ENCODE measurements at regions of chr19 and their contacts with region 1.

Region 1: DNA sequence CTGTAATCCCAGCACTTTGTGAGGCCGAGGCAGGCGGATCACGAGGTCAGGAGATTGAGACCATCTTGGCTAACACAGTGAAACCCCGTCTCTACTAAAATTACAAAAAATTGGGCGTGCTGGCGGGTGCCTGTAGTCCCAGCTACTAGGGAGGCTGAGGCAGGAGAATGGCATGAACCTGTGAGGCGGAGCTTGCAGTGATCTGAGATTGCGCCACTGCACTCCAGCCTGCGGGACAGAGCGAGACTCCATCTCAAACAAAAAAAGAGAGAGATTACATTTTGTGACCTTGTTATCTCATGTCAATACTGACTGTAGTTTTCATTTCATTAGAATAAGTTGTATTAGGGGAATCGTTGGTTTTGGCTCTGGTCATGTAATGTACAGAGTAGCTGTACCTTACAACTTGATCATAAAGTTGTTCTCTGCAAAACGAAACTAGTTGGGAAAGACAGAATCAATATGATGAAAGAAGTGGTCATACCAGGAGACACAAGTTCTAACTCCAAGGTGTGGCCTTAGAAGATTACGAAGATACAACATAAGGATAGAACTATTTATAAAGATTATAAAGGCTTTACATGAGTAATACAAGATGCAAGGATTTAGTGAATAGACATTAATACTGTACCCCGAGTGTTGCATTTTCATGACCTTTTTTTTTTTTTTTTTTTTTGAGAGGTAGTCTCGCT is 15.3 kb downstream of the TMEM38A start:
- DNase-seq: no peak
- ATAC-seq: no peak
- H3K4me3 ChIP-seq: no peak overlapping the region
- H3K27ac ChIP-seq: no peak overlapping the region
- H3K4me1 ChIP-seq: no peaks in the 10 kb centered on the region
- H3K27me3 ChIP-seq: no peaks in the 10 kb centered on the region
- CTCF ChIP-seq: no peak

Region 2: DNA sequence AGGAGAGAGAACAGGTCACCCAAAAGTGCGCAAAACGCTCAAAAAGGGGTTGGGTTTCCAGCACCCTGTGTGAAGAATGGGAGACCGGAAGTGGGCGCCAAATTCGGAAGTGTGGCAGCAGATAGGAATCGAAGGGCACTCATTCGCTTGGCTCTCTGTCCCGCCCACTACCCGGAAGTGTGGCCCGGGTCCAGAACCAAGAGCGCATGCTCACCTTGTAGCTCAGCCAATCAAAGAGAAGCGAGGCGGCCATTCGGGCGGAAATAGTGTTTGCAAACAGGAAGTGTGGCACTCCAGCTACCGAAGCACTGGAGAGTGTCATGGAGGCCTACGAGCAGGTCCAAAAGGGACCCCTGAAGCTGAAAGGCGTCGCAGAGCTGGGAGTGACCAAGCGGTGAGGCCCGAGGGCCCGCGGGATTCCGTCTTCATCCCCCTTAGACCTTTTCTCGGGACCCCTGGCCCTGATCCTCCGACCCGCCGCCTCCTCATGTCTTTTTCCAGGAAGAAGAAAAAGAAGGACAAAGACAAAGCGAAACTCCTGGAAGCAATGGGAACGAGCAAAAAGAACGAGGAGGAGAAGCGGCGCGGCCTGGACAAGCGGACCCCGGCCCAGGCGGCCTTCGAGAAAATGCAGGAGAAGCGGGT is 491.0 kb before region 1 on chr19 and contains the start of gene FAM32A:
- CTCF ChIA-PET with region 1: no interaction called
- POLR2A ChIA-PET with region 1: no interaction called
- in situ Hi-C with region 1: no loop called
- intact Hi-C with region 1: no loop called
- DNase-seq: peak; percentile 96
- ATAC-seq: peak; percentile 94
- H3K4me3 ChIP-seq: peak within 1 kb of the TSS; percentile 73 to 97
- H3K27ac ChIP-seq: peak within 1 kb of the TSS; percentile 92
- H3K4me1 ChIP-seq: no peaks in the 10 kb centered on the region; the same call in 1 of the 2 replicates
- H3K27me3 ChIP-seq: no peaks in the 10 kb centered on the region
- CTCF ChIP-seq: no peak
- total RNA-seq, gene FAM32A: 44.6 TPM

Region 3: DNA sequence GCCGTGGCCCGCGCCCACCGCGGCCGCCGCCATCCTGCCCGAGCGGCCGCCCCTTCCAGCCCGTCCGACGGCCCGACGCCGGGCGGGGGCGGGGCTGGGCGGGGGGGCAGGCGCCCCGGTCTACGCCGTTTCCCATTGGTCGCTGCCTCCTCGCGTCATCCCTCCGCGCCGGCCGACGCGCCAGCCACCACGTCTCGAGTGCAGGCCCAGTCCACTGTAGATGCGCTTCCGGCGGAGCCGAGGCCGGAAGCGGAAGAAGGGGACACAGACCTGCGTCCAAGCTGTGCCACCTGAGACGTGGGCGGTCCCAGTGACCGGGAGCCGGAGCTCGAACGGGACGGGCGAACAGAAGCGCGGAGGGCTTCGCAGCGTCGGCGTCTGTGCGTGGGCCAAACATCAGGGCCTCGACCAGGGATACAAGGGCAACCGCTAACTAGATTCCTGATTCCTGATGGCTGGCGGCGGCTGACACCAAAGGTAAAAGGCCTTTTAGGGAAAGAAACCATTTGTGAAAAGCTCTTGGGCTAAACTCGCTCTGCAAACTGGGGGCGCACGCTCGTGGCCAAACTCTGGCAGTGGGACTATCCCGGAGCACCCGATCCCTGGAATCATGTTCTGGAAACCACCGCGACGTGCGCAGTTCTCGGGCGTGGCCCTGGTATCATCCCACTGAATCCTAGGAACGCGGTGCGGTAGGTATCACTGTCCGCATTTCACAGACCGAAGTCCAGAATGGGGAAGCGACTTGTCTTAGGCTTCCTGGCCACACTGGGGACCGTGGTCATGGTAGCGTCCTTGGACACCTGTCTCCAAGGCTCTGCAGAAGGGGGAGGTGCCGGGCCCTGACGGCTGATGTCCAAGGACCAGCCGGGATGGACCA is 103.7 kb before region 1 on chr19 and contains the start of gene SLC35E1:
- CTCF ChIA-PET with region 1: no interaction called
- POLR2A ChIA-PET with region 1: no interaction called
- in situ Hi-C with region 1: no loop called
- intact Hi-C with region 1: no loop called
- DNase-seq: peak; percentile 61
- ATAC-seq: peak; percentile 98
- H3K4me3 ChIP-seq: peak within 1 kb of the TSS; percentile 93 to 94
- H3K27ac ChIP-seq: peak within 1 kb of the TSS; percentile 87
- H3K4me1 ChIP-seq: peaks cover 8% of the 10 kb centered on the region
- H3K27me3 ChIP-seq: no peaks in the 10 kb centered on the region
- CTCF ChIP-seq: no peak
- total RNA-seq, gene SLC35E1: 43.5 TPM

Region 4: GRCh38 chr19:16688084-16688483 is 11.8 kb after region 1 on chr19:
- CTCF ChIA-PET with region 1: interaction called, 5 read pairs
- POLR2A ChIA-PET with region 1: interaction called, 14 read pairs
- in situ Hi-C with region 1: no loop called
- intact Hi-C with region 1: no loop called
- DNase-seq: no peak
- ATAC-seq: no peak
- H3K4me3 ChIP-seq: no peak overlapping the region
- H3K27ac ChIP-seq: no peak overlapping the region
- H3K4me1 ChIP-seq: peaks cover 4% of the 10 kb centered on the region; the same call in 1 of the 2 replicates
- H3K27me3 ChIP-seq: no peaks in the 10 kb centered on the region
- CTCF ChIP-seq: no peak

Region 5: DNA sequence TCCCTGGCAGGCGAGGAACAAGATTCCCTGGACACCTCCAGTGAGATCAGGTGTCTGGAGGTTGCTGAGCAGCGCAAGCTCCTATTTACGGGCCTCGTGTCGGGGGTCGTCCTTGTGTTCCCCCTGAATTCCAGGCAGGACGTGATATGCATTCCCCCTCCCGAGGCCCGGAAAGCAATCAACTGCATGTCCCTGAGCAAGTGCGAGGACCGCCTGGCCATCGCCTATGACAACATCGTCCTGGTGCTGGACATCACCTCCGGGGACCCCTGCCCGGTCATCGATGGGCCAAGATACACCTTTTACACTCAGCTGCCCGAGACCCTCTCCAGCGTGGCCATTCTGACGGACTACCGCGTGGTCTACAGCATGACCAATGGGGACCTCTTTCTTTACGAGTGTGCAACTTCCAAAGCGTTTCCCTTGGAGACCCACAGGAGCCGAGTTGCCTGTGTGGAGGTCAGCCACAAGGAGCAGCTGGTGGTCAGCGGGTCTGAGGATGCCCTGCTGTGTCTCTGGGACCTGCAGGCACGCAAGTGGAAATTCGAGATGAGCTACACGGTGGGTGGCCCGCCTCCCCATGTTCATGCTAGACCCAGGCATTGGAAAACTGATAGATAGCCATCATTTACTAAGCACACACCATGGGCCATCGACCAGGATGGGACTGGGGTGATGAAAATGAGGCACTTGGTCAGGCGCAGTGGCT is 131.5 kb after region 1 on chr19:
- CTCF ChIA-PET with region 1: no interaction called
- POLR2A ChIA-PET with region 1: interaction called, 10 read pairs
- in situ Hi-C with region 1: no loop called
- intact Hi-C with region 1: no loop called
- DNase-seq: no peak
- ATAC-seq: no peak
- H3K4me3 ChIP-seq: no peak overlapping the region
- H3K27ac ChIP-seq: no peak overlapping the region
- H3K4me1 ChIP-seq: no peaks in the 10 kb centered on the region
- H3K27me3 ChIP-seq: no peaks in the 10 kb centered on the region
- CTCF ChIP-seq: no peak

Region 6: DNA sequence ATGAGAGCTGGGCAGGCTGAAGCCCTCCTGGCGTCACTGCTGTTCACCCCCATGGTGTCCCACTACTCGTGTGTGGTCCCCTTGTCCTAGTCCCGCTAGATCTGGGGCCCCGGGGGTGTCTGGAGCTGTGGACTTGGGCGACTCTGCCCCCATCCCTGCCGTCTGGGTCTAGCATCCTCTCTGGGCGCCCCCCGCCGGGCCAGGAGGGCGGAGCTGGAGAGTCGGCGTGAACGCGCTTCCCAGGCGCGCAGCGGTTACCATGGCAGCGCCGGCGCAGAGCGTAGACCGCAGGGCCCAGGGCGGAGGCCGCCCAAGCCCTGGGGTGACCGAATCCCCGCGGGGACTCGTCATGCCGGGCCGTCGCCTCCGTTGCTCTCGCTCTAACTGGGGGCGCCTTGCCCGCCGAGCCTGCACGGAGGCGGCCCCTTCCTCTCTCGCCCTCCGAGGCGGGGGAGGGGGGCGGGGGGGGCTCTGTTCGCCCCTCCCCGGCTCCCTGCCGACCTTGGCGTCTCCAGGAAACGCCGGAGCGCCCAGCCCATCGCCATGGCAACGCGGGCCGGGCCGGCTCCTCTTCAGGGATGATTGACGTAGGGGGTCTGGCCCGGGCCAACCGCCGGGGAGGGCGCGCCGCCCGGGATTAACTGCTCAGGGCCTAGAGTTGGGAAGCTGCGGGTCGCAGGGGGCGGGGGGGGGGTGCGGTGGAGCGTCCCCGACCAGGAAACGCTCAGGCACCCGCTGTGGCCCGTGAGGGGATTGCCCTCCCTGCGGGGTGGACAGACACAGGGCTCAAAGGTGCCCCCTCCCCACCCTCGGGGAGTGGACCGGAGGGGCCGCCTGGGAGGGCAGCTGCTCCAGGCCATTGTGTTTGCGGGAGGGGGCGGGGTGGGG is 1752.8 kb after region 1 on chr19:
- CTCF ChIA-PET with region 1: no interaction called
- POLR2A ChIA-PET with region 1: no interaction called
- in situ Hi-C with region 1: no loop called
- intact Hi-C with region 1: no loop called
- DNase-seq: no peak
- ATAC-seq: peak; percentile 64
- H3K4me3 ChIP-seq: peak overlapping the region; percentile 16 to 18; a peak in 1 of 4 replicates
- H3K27ac ChIP-seq: peak overlapping the region; percentile 54; the same call in 1 of the 2 replicates
- H3K4me1 ChIP-seq: peaks cover 52% of the 10 kb centered on the region
- H3K27me3 ChIP-seq: no peaks in the 10 kb centered on the region
- CTCF ChIP-seq: no peak

Measured in Panc1 (cell line).